ENCODE measurements at regions of chr4 and their contacts with region 1.

Region 1: DNA sequence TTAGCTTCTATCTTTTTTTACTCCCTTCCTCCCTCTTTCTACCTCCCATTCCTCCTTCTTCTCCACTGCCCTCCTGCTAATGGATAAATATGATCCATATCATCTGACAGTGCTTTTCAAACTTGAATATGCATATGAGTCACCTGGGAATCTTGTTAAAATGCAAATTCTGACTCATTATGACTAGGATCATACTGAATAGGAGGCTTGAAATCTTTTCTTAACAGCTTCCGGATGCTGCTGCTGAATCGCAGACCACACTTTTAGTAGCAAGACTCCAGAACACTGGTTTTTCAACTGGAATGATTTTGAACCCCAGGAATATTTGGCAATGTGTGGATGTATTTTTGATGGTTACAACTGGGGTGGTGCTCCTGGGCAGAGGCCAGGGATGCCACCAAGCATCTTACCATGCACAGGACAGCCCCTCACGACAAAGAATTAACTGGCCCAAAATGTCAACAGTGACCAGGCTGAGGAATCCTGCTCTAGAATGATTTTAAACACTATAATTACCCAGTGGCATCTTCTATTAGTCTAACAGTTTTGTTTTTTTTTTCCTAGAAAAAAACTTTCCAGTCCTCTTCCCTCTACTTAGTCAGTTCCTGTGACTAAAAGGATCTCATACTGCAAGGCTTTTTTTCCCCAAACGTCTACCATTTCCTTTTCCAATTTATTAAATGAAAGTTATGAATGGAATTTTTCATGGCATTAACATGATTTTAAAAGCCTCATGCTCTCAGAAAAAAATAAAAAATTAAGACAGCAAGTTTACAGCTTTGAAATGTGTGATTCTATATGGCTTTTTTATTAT is 10.6 kb upstream of the PYURF start:
- DNase-seq: no peak
- H3K4me3 Mint-ChIP-seq: no peak overlapping the region
- H3K27ac Mint-ChIP-seq: no peak overlapping the region
- H3K4me1 Mint-ChIP-seq: peaks cover 26% of the 10 kb centered on the region
- H3K27me3 Mint-ChIP-seq: no peaks in the 10 kb centered on the region

Region 2: DNA sequence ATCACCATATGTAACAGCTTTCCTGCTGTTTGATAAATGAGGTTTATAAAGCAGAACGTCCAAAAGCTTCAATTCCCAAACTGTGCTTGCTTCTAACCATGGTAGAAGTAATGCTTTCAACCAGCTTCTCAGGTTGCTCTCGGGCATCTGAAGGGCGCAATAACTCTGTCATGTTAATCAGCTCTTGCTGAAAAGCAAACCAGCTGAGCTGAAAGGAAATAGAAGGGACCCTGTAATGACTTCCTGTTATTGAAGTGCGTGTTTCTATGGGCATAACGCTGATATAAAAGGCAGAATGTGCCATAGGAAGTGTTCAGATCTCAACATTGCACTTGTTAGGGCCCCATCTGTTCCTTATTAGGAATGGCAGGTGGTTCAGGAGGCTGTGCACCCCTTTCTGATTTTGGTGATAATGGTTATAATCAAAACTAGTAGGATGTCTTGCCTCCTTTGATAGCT is 79.3 kb after region 1 on chr4:
- CTCF ChIA-PET with region 1: interaction called, 8 read pairs
- POLR2A ChIA-PET with region 1: no interaction called
- intact Hi-C with region 1: loop called (anchors 1 kb)
- DNase-seq: peak; percentile 48
- H3K4me3 Mint-ChIP-seq: peak overlapping the region; percentile 58
- H3K27ac Mint-ChIP-seq: peak overlapping the region; percentile 87
- H3K4me1 Mint-ChIP-seq: peaks cover 78% of the 10 kb centered on the region
- H3K27me3 Mint-ChIP-seq: no peaks in the 10 kb centered on the region

Region 3: DNA sequence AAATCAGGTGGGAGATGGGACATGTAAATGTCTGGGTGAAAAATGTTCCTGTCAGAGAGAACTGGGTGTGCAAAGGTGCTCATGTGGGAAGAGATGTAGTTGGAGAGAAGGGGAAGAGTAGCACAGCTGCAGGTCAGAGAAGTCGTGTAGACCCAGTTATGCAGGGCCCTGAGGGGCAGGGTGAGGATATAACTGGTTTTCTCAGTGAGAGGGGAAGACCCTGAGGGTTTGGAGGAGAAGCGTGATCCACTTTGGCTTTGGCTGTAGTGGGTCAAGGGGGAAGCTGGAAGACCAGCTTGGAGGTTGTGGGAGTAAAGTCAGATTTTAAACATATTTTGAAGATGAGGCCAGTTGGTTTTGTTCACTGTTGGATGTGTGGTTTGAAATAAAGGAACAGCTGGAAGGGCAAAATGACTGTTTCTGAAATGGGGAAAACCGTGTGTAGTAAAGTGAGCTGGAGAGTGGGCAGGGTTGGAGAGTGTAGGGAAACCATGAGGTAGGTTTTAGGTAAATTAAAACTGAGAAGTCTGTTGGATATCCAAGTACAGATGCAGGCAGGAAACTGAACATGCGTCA is 119.3 kb after region 1 on chr4:
- CTCF ChIA-PET with region 1: interaction called, 28 read pairs
- POLR2A ChIA-PET with region 1: no interaction called
- intact Hi-C with region 1: no loop called
- DNase-seq: no peak
- H3K4me3 Mint-ChIP-seq: no peak overlapping the region
- H3K27ac Mint-ChIP-seq: no peak overlapping the region
- H3K4me1 Mint-ChIP-seq: peaks cover 25% of the 10 kb centered on the region
- H3K27me3 Mint-ChIP-seq: no peaks in the 10 kb centered on the region

Region 4: GRCh38 chr4:88659055-88659889 is 125.1 kb after region 1 on chr4:
- CTCF ChIA-PET with region 1: interaction called, 65 read pairs
- POLR2A ChIA-PET with region 1: no interaction called
- intact Hi-C with region 1: loop called (anchors 1 kb)
- DNase-seq: peak; percentile 51
- H3K4me3 Mint-ChIP-seq: no peak overlapping the region
- H3K27ac Mint-ChIP-seq: no peak overlapping the region
- H3K4me1 Mint-ChIP-seq: peaks cover 2% of the 10 kb centered on the region
- H3K27me3 Mint-ChIP-seq: no peaks in the 10 kb centered on the region

Region 5: GRCh38 chr4:88792268-88792781 is 258.2 kb after region 1 on chr4:
- CTCF ChIA-PET with region 1: interaction called, 14 read pairs
- POLR2A ChIA-PET with region 1: no interaction called
- intact Hi-C with region 1: loop called (anchors 1 kb)
- DNase-seq: no peak
- H3K4me3 Mint-ChIP-seq: no peak overlapping the region
- H3K27ac Mint-ChIP-seq: no peak overlapping the region
- H3K4me1 Mint-ChIP-seq: peaks cover 19% of the 10 kb centered on the region
- H3K27me3 Mint-ChIP-seq: peaks cover under 1% of the 10 kb centered on the region

Region 6: GRCh38 chr4:88803600-88804096 is 269.5 kb after region 1 on chr4:
- CTCF ChIA-PET with region 1: interaction called, 4 read pairs
- POLR2A ChIA-PET with region 1: no interaction called
- intact Hi-C with region 1: loop called (anchors 1 kb)
- DNase-seq: peak; percentile 26
- H3K4me3 Mint-ChIP-seq: no peak overlapping the region
- H3K27ac Mint-ChIP-seq: no peak overlapping the region
- H3K4me1 Mint-ChIP-seq: peaks cover 18% of the 10 kb centered on the region
- H3K27me3 Mint-ChIP-seq: peaks cover 7% of the 10 kb centered on the region

Region 7: DNA sequence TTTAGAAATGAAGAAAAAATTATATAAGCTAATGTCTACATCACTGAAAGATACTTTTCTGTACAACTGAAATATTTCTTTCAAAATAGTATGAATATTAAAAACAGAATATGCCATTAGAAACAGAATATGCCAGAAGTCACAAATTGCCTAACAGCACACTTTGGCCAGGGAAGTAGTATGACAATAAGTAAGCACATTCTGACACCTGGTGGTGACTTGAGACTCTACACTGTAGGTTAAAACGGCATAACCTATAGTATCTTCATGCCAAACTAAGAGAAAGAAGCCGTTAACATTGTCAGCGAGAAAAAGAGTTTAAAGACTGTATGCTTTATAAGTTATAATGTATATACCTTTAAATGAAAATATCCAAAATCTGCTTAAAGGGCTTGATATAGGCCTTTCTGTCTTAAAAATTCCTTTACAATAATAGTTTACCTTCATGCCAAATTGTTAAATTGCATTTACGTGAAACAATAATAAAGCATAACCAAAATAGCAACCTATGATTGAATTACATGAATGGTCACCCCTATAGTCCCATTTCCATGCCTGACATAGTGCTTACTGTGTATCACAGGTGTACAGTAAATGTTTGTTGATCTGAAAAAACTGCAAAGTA is 490.0 kb after region 1 on chr4:
- CTCF ChIA-PET with region 1: interaction called, 29 read pairs
- POLR2A ChIA-PET with region 1: no interaction called
- intact Hi-C with region 1: no loop called
- DNase-seq: peak; percentile 33
- H3K4me3 Mint-ChIP-seq: no peak overlapping the region
- H3K27ac Mint-ChIP-seq: no peak overlapping the region
- H3K4me1 Mint-ChIP-seq: peaks cover 5% of the 10 kb centered on the region
- H3K27me3 Mint-ChIP-seq: no peaks in the 10 kb centered on the region

Region 8: DNA sequence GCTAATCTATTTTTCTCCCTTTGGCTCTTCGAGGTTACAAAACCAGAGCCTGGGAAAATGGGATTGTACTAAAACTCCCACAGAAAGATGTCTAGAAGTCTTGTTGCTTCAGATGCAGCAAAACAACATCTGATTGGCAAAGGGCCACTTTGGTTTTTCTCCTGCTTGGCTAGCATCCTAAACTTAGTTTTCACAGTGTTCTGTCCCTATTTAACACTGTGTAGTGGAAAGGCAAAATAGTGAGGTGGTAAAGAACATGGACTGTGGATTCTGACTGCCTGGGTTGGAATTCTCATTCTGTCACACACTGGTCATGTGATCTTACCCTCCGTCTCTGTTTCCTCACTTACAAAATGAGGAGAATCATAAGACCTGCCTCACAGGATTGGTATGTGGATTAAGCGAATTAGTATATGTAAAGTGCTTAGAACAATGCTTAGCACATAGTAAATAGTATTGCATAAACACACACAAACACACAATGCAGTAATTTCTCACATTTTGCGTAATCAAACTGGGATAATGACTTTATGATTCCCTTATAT is 600.7 kb after region 1 on chr4:
- CTCF ChIA-PET with region 1: no interaction called
- POLR2A ChIA-PET with region 1: no interaction called
- intact Hi-C with region 1: no loop called
- DNase-seq: no peak
- H3K4me3 Mint-ChIP-seq: no peak overlapping the region
- H3K27ac Mint-ChIP-seq: no peak overlapping the region
- H3K4me1 Mint-ChIP-seq: no peaks in the 10 kb centered on the region
- H3K27me3 Mint-ChIP-seq: no peaks in the 10 kb centered on the region